Activated naive CD4-positive, alpha-beta T cell treated with anti-CD3 and anti-CD28 coated beads, Interleukin-2, amount 10 ng/mL, durations not matched to agents 7 days and 5 days (primary cell): ENCODE measurements at regions of chr3 and their contacts with region 1.

Region 1: GRCh38 chr3:101381809-101382208 is 61.4 kb upstream of the IMPG2 start:
- DNase-seq: no peak
- H3K4me3 Mint-ChIP-seq: no peak overlapping the region
- H3K27ac Mint-ChIP-seq: no peak overlapping the region
- H3K4me1 Mint-ChIP-seq: peaks cover 30% of the 10 kb centered on the region
- H3K27me3 Mint-ChIP-seq: no peaks in the 10 kb centered on the region

Region 2: GRCh38 chr3:101069901-101070798 is 311.7 kb before region 1 on chr3:
- CTCF ChIA-PET with region 1: interaction called, 10 read pairs
- DNase-seq: peak; percentile 77
- H3K4me3 Mint-ChIP-seq: no peak overlapping the region
- H3K27ac Mint-ChIP-seq: no peak overlapping the region
- H3K4me1 Mint-ChIP-seq: peaks cover 2% of the 10 kb centered on the region
- H3K27me3 Mint-ChIP-seq: peaks cover 6% of the 10 kb centered on the region

Region 3: DNA sequence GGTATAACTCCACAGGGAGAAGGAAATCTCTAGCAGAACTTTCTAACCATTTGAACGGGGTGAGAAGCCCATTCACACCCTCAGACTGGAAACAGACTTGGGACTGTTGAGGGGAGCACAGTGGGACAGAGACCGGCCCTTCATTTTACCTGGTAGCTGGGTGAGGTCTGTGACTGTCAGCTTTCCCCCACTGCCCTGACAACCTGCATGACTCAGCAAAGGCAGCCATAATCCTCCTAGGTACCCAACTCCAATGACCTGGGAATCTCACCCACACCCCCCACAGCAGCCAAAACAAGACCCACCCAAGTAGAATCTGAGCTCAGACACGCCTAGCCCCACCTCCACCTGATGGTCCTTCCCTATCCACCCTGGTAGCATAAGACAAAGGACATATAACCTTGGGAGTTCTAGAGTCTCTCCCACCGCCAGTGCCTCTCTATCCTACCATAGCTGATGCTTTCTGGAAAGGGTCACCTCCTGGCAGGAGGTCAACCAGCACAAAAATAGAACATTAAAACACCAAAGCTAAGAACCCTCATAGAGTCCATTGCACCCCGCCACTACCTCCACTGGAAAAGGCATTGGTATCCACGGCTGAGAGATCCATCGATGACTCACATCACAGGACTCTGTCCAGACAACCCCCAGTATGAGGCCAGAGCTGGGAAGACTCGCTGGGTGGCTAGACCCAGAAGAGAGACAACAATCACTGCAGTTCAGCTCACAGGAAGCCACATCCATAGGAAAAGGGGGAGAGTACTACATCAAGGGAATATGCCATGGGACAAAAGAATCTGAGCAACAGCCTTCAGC is 103.2 kb after region 1 on chr3:
- CTCF ChIA-PET with region 1: no interaction called
- DNase-seq: no peak
- H3K4me3 Mint-ChIP-seq: no peak overlapping the region
- H3K27ac Mint-ChIP-seq: peak overlapping the region; percentile 1
- H3K4me1 Mint-ChIP-seq: peaks cover 13% of the 10 kb centered on the region
- H3K27me3 Mint-ChIP-seq: no peaks in the 10 kb centered on the region

Region 4: GRCh38 chr3:101611023-101611422 is 229.2 kb after region 1 on chr3:
- CTCF ChIA-PET with region 1: no interaction called
- DNase-seq: no peak
- H3K4me3 Mint-ChIP-seq: no peak overlapping the region
- H3K27ac Mint-ChIP-seq: no peak overlapping the region
- H3K4me1 Mint-ChIP-seq: no peaks in the 10 kb centered on the region
- H3K27me3 Mint-ChIP-seq: no peaks in the 10 kb centered on the region